MCF 10A (cell line): ENCODE measurements at regions of chr11 and their contacts with region 1.

Region 1: DNA sequence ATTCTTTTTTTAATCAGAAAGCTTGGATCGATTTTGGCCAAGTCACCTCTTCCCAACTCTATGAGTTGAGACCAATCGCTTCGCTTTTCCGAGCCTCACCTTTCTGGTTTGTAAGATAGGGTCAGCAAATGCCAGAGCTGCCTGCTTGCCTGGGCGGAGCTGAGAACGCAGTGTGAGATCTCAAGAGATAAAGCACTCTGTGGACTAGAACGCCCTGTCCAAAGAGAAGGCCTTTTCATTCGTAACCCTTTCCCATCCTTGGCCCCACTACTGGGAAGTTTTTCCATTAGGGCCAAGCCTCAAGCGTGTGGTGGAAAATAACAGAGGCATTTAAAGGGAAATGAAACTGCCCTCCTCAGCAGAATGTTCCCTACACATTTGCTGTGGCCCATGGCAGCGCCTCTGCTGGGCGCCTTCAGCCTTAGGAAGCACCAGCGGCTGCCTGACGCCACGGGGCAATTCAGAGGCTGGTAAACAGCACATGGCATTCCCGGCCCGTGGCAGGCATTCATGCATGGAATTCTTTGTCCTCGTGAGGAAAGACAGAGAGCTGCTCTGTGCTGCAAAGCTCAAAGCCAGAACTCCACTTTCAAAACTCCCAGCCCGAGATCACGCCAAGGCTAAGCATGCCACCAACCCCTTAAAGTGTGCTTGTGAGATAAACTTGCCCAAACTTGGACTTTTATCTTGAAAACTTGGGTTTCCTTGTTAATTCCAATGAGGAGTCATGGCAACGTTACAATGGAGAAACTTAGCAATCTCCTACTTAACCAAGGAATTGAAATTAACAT is 38.1 kb downstream of the AHNAK start:
- DNase-seq: peak; percentile 60
- H3K4me3 Mint-ChIP-seq: peak overlapping the region; percentile 51
- H3K27ac Mint-ChIP-seq: peak overlapping the region; percentile 88
- H3K4me1 Mint-ChIP-seq: peaks cover 8% of the 10 kb centered on the region
- H3K27me3 Mint-ChIP-seq: no peaks in the 10 kb centered on the region
- CTCF ChIP-seq: peak; percentile 29

Region 2: GRCh38 chr11:62421996-62422395 is 86.5 kb before region 1 on chr11:
- CTCF ChIA-PET with region 1: interaction called, 23 read pairs
- POLR2A ChIA-PET with region 1: interaction called, 4 read pairs
- intact Hi-C with region 1: no loop called
- DNase-seq: no peak
- H3K4me3 Mint-ChIP-seq: no peak overlapping the region
- H3K27ac Mint-ChIP-seq: no peak overlapping the region
- H3K4me1 Mint-ChIP-seq: no peaks in the 10 kb centered on the region
- H3K27me3 Mint-ChIP-seq: no peaks in the 10 kb centered on the region
- CTCF ChIP-seq: no peak

Region 3: DNA sequence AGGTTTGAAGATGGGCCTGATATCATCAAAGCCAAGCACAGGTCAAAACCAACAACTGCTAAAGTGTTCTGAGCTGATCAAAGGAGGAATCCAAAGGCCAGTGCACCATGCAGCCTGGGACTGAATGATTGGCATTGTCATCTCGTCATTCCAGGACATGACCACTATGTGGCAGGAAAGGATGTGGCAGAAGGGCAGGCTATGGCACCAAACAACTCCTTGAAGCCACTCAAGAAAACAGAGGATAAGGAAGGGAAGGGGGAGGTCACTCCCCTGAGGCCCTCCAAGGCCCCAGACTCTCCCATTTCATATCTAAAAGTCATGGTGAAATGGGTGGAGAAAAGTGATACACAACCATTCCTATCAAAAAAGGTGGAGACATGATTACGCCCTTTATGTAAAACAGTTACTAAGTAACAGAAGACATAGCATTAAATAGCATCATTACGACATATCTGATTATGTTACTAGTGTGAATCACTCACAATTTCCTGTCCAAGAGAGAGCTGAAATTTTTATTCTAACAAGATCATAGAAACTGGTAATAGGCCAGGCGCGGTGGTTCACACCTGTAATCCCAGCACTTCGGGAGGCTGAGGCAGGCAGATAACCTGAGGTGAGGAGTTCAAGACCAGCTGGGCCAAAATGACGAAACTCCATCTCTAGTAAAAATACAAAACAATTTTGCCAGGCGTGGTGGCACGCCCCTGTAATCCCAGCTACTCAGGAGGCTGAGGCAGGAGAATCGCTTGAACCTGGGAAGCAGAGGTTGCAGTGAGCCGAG is 11.1 kb before region 1 on chr11:
- CTCF ChIA-PET with region 1: interaction called, 14 read pairs
- POLR2A ChIA-PET with region 1: interaction called, 25 read pairs
- intact Hi-C with region 1: no loop called
- DNase-seq: peak; percentile 83
- H3K4me3 Mint-ChIP-seq: no peak overlapping the region
- H3K27ac Mint-ChIP-seq: peak overlapping the region; percentile 60
- H3K4me1 Mint-ChIP-seq: peaks cover 28% of the 10 kb centered on the region
- H3K27me3 Mint-ChIP-seq: no peaks in the 10 kb centered on the region
- CTCF ChIP-seq: peak; percentile 41